Activated naive CD4-positive, alpha-beta T cell treated with anti-CD3 and anti-CD28 coated beads, Interleukin-2, amount 10 ng/mL, durations not matched to agents 7 days and 5 days (primary cell): ENCODE measurements at regions of chr10 and their contacts with region 1.

Region 1: DNA sequence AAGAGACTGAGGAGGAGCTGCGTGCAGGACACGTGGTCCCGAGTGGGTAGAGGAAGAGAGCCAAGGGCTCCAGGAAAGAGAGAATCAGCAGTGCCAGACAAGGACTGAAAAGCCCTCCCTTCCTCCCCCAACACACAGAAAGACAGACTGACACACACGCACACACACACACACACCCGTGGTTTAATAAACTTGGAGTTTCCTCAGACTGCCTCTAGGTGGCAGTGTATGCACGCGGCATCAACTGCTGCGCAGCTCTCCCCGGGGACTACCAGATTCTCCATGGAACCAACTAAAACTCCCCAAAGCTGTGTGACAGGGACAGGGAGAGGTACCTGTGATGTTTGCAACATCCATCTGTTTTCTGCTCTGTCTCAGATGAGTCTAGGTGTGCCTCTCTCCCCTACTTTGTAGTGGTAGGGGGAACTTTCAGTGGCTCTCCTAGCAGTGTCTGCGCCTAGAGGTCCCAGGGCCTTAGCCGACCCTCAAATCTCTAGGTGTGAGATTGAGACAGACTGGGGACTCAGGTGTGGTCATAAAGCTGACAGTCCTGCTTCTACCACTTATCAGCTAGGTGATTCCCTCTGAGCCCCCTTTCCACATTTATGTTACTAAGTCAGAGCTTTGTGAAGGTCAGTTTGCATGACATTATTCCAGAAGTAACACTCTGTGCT is 9.3 kb upstream of the TSPAN14 start:
- DNase-seq: peak; percentile 85
- H3K4me3 Mint-ChIP-seq: no peak overlapping the region
- H3K27ac Mint-ChIP-seq: no peak overlapping the region
- H3K4me1 Mint-ChIP-seq: peaks cover 60% of the 10 kb centered on the region
- H3K27me3 Mint-ChIP-seq: peaks cover 9% of the 10 kb centered on the region

Region 2: DNA sequence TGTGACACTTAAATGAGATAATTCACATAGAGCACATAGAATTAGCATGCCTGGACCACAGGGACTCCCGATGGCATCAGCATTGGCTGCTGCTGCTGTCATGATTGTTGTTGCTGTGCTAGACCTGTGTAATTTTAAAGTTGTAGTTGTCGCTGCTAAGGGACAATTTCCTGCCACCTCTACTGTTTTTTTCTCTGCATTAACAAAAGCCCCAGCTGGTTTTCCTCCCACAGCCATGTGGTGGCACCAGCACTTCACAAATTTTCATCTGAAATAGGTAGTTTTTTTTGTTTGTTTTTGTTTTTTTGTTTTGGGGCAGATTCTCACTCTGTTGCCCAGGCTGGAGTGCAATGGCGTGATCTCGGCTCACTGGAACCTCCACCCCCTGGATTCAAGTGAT is 61.8 kb before region 1 on chr10:
- CTCF ChIA-PET with region 1: interaction called, 21 read pairs
- DNase-seq: peak; percentile 71
- H3K4me3 Mint-ChIP-seq: no peak overlapping the region
- H3K27ac Mint-ChIP-seq: no peak overlapping the region
- H3K4me1 Mint-ChIP-seq: peaks cover 18% of the 10 kb centered on the region
- H3K27me3 Mint-ChIP-seq: peaks cover 5% of the 10 kb centered on the region

Region 3: DNA sequence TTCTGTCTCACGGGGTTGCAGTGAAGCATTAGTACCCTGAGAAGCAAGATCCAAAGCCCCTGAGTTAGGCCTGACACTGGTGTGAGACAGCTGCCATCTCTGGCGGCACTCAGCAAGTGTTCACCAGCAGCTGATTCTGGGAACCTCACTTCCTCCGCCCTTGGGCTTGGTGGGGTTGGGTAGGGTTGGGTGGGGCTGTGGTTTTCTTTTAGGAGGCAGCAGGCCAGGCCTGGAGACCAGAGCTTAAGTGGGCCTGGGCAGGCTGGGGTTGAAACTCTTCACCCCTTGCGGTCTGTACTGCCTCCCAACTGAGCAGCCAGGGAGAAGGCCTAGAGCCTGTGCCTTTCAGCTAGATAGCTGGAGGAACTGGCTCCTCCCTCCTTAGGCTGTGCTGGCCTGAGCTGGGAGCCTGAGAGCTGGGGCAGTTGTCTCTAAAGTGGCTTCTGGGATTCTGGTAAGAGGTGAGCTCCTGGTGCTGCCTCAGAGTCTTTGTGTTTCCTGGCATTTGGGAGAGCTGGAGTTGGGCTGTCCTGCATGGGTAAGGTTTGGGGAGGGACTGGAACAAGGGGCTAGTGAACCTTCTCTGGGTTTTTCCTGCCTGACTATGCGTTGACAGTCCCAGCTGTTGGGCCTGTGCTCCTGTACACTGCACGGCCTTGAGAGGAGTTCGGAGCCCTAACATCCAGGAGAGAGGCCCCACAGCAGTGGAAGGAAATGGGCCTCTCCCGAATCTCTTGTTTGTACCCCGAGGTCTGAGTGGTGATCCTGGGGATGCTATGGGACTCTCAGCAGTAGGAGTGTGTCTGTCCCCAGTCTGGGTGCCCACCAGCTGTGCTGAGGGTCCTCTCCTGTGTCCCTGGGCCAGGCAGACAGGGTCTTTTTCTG is 14.5 kb after region 1 on chr10:
- CTCF ChIA-PET with region 1: interaction called, 24 read pairs
- DNase-seq: peak; percentile 85
- H3K4me3 Mint-ChIP-seq: peak overlapping the region; percentile 94
- H3K27ac Mint-ChIP-seq: peak overlapping the region; percentile 94
- H3K4me1 Mint-ChIP-seq: peaks cover 85% of the 10 kb centered on the region
- H3K27me3 Mint-ChIP-seq: no peaks in the 10 kb centered on the region

Region 4: GRCh38 chr10:80493522-80494051 is 48.8 kb after region 1 on chr10:
- CTCF ChIA-PET with region 1: interaction called, 986 read pairs
- DNase-seq: peak; percentile 51
- H3K4me3 Mint-ChIP-seq: peak overlapping the region; percentile 31
- H3K27ac Mint-ChIP-seq: peak overlapping the region; percentile 79
- H3K4me1 Mint-ChIP-seq: peaks cover 99% of the 10 kb centered on the region
- H3K27me3 Mint-ChIP-seq: no peaks in the 10 kb centered on the region

Region 5: DNA sequence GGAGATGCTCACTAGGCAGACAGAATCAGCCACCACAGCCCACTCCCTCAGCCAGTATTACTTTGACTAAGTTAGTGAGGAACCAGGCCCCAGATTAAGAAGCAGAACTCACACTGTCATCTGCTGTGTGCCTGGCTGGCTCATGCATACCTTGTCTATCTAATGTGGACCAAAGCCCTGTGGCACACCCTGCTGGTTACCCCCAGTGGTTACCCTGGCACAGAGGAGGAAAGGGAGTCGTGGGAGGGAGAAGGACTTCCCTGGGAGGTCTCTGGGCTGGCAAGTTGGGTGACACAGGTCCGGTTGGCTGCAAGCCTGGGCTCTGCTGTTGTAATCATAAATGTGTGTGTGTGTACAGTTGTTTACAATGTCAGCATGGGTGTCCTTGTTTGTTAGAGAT is 85.5 kb after region 1 on chr10:
- CTCF ChIA-PET with region 1: interaction called, 10 read pairs
- DNase-seq: peak; percentile 70
- H3K4me3 Mint-ChIP-seq: peak overlapping the region; percentile 42
- H3K27ac Mint-ChIP-seq: peak overlapping the region; percentile 95
- H3K4me1 Mint-ChIP-seq: peaks cover 77% of the 10 kb centered on the region
- H3K27me3 Mint-ChIP-seq: no peaks in the 10 kb centered on the region

Region 6: GRCh38 chr10:80647173-80647811 is 202.5 kb after region 1 on chr10:
- CTCF ChIA-PET with region 1: no interaction called
- DNase-seq: no peak
- H3K4me3 Mint-ChIP-seq: no peak overlapping the region
- H3K27ac Mint-ChIP-seq: no peak overlapping the region
- H3K4me1 Mint-ChIP-seq: no peaks in the 10 kb centered on the region
- H3K27me3 Mint-ChIP-seq: peaks cover 7% of the 10 kb centered on the region

Region 7: DNA sequence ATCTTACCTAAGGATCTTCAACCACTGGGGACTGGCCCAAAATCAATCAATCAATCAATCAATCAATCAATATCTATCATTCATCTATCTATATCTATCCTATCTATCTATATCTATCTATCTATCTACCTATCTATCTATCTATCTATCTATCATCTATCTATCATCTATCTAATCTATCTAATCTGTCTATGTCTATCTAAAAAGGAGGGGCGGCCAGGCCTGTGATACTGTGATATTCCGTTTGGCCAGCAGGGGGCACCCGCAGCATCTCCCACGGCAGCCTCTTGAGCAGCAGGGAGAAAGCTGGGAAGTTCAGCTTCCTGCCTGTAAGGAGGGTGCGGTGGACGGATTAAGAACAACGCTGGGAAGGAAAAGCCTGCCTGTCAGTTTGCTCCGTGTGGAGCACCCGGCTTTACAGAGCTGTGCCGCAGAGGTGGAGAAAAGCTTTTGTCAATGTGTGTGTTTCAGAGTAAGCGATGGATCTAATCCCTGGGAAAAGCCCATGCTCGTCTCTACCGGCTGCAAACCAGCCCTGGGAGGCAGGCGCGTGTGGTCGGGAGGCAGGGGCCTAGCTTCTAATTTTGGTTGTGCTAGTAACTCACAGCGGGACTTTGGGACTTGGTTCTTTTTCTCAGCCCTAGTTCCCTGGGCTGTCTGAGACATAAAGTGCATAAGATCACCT is 217.9 kb after region 1 on chr10:
- CTCF ChIA-PET with region 1: interaction called, 39 read pairs
- DNase-seq: peak; percentile 75
- H3K4me3 Mint-ChIP-seq: no peak overlapping the region
- H3K27ac Mint-ChIP-seq: no peak overlapping the region
- H3K4me1 Mint-ChIP-seq: peaks cover 4% of the 10 kb centered on the region
- H3K27me3 Mint-ChIP-seq: peaks cover 34% of the 10 kb centered on the region

Region 8: GRCh38 chr10:80924063-80924952 is 479.5 kb after region 1 on chr10:
- CTCF ChIA-PET with region 1: interaction called, 14 read pairs
- DNase-seq: peak; percentile 46
- H3K4me3 Mint-ChIP-seq: no peak overlapping the region
- H3K27ac Mint-ChIP-seq: no peak overlapping the region
- H3K4me1 Mint-ChIP-seq: no peaks in the 10 kb centered on the region
- H3K27me3 Mint-ChIP-seq: peaks cover 5% of the 10 kb centered on the region